BJ (cell line): ENCODE measurements at regions of chr11 and their contacts with region 1.

Region 1: DNA sequence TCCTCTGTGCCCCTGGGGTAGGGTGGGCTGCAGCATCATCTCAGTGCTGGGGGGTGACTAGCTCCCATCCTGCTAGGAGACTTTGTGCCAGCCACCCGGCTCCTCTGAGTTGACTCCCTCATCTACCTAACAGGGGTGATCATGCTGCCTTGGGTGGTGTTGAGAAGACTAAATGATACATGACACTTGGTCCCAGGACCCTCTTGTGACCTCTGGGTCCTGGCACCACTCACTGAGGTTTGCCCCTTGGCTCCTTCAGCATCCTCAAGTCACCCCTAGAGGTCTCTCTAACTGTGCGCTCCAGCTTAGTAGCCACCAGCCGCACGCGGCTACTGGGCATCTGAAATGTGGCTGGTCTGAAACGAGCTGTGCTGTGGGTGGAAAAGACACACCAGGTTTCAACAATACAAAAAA is 72.1 kb downstream of the LRRC32 start:
- DNase-seq: no peak
- H3K4me3 ChIP-seq: no peak overlapping the region
- H3K27me3 ChIP-seq: no peaks in the 10 kb centered on the region
- CTCF ChIP-seq: peak; percentile 51

Region 2: GRCh38 chr11:76577199-76577920 is 21.1 kb before region 1 on chr11:
- CTCF ChIA-PET with region 1: no interaction called
- POLR2A ChIA-PET with region 1: no interaction called
- DNase-seq: no peak
- H3K4me3 ChIP-seq: no peak overlapping the region
- H3K27me3 ChIP-seq: no peaks in the 10 kb centered on the region
- CTCF ChIP-seq: no peak

Region 3: DNA sequence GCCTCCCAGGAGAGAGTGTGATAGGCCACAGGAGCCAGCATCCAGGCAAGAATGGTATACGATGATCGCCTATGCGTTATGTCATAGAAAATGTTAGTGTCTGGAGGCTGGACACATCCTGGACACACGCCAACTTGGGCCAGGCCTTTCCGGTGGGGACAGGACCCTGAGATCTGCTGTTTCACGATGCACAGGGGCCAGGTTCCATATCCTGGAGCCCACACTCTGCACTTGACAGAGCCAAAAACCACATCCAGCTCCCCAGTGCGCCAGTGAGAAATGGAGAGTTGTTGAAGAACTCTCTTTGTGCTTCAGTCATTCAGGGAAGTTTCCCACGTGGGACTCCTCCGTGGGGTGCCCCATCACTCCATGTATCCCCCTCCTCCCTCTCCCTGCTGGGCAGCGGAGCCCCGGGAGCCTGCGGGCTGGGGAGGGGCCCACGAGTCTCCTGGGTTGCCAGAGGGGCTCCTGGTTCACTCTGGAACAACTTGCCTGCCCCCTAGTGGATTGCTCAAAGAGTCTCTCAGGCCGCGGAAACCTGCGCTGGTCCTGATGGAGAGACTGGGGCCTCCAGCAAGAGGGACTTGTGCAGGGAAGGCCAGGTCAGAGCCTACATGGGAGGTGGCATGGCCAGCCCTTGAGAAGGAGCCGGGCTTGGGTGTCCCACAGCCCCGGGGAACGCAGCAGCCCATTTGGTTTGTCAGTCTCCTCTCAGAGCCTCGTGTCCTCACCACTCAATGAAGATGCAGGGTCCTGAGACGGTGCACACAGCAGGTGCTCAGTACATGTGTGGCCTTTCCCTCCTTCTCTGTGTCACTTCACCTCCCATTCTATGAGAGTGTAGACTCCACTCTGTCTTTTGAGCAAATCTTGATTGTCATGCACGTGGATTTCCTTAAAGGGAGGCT is 82.3 kb after region 1 on chr11:
- CTCF ChIA-PET with region 1: interaction called, 20 read pairs
- POLR2A ChIA-PET with region 1: no interaction called
- DNase-seq: no peak
- H3K4me3 ChIP-seq: no peak overlapping the region
- H3K27me3 ChIP-seq: peaks cover 10% of the 10 kb centered on the region
- CTCF ChIP-seq: peak; percentile 89